Colonic mucosa (tissue), 4 donors: ENCODE measurements at regions of chr18 and their contacts with region 1.

Region 1: DNA sequence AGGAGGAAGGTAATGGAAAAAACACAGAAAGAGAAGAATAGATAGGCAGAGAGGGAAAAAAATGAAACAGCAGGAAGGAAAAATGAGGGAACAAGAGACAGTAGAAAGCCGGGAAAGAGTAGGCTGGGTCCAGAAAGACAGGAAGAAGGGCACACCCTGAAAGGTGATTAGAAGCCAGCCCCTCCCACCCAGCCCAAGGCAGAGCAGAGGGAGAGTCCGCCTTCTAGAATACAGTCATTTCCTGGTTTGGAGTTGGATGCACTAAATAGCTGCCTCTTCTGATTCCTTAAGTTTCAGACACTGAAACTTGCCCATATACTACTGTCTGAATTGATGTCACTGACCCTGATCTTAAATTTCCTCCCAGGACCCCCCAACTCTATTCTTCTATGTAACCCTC is 17.9 kb upstream of the DSG3 start:
- DNase-seq: peak; percentile 79
- H3K4me3 ChIP-seq: no peak overlapping the region
- H3K27ac ChIP-seq: peak overlapping the region; percentile 20
- H3K4me1 ChIP-seq: no peaks in the 10 kb centered on the region
- H3K27me3 ChIP-seq: no peaks in the 10 kb centered on the region
- CTCF ChIP-seq: no peak

Region 2: DNA sequence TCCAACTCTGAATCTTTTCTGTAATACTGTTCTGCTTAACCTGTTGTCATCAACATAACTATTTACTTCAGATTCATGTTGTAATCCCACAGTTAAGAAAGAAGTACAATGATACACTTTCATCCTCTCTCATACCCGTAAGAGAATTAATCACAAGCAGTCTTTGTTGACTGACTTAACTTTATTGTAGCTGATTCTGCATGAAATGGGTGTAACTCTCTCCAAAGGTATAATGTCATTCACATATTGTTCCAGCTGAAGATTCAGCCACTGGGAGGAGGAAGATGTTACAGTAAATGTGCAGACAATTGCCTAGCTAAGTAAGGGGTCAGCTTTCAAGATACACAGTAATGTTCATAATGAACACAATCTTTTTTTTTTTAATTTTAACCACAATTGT is 54.8 kb after region 1 on chr18:
- intact Hi-C with region 1: loop called (anchors 5 kb)
- DNase-seq: no peak
- H3K4me3 ChIP-seq: no peak overlapping the region
- H3K27ac ChIP-seq: no peak overlapping the region
- H3K4me1 ChIP-seq: no peaks in the 10 kb centered on the region
- H3K27me3 ChIP-seq: no peaks in the 10 kb centered on the region
- CTCF ChIP-seq: no peak